Activated CD8-positive, alpha-beta T cell treated with anti-CD3 and anti-CD28 coated beads, Interleukin-2, amount 10 ng/mL, durations not matched to agents 7 days and 5 days (primary cell): ENCODE measurements at regions of chr2 and their contacts with region 1.

Region 1: GRCh38 chr2:162333968-162334367 is 10.0 kb upstream of the GCA start:
- DNase-seq: peak; percentile 41
- ATAC-seq: peak; percentile 63
- H3K4me3 Mint-ChIP-seq: no peak overlapping the region
- H3K27ac Mint-ChIP-seq: no peak overlapping the region
- H3K4me1 Mint-ChIP-seq: peaks cover 1% of the 10 kb centered on the region
- H3K27me3 Mint-ChIP-seq: no peaks in the 10 kb centered on the region

Region 2: DNA sequence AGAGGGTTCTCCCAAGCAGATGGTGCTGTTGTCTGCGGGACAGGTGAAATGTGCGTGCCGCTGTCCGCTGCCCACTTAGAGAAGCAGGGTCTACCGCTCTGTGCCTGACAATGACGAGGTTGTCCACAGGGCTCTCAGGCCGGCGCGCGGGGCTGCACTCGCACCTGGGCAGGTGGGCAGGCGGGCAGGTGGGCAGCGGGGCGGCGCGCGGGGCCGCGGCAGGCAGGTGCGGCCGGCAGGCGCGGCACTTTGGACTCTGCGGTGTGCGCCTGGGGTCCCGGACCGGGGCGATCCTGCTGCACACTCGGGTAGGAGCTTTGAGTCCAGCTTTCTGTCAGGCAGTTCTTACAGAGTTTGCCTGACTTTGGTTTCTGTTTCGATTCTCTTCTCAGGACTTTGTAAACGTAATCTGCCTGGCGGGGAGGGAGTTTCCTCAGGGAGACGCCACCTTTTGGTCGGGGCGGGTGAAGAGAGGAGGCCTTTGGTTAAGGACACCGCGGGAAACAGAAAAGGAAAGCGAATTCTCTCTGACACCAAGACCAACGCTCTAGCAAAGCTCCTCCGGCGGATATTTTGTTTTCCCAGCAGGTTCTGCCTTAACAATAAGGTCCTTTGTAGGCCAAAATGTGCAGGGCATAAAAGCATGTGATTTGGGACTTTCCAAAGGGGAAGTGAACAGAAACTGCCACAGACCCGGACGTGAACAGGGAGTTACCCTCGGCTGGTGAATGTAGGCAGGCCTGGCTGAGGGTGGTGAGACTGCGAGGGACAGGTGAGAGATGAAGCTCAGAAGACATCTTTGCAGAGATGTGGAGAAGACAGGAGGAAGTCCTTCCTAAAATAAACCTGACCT is 15.4 kb before region 1 on chr2 and contains the start of gene IFIH1:
- CTCF ChIA-PET with region 1: interaction called, 28 read pairs
- POLR2A ChIA-PET with region 1: interaction called, 6 read pairs
- DNase-seq: peak; percentile 82
- ATAC-seq: peak; percentile 87
- H3K4me3 Mint-ChIP-seq: peak within 1 kb of the TSS; percentile 95
- H3K27ac Mint-ChIP-seq: peak within 1 kb of the TSS; percentile 99
- H3K4me1 Mint-ChIP-seq: peaks cover 61% of the 10 kb centered on the region
- H3K27me3 Mint-ChIP-seq: no peaks in the 10 kb centered on the region
- total RNA-seq, gene IFIH1: 37.3 to 37.6 TPM

Region 3: GRCh38 chr2:162343824-162344616 is 10.1 kb after region 1 on chr2 and contains the start of gene GCA:
- CTCF ChIA-PET with region 1: interaction called, 17 read pairs
- POLR2A ChIA-PET with region 1: no interaction called
- DNase-seq: peak; percentile 99
- ATAC-seq: peak; percentile 99
- H3K4me3 Mint-ChIP-seq: peak within 1 kb of the TSS; percentile 89
- H3K27ac Mint-ChIP-seq: peak within 1 kb of the TSS; percentile 81
- H3K4me1 Mint-ChIP-seq: peaks cover 16% of the 10 kb centered on the region
- H3K27me3 Mint-ChIP-seq: peaks cover 8% of the 10 kb centered on the region
- total RNA-seq, gene GCA: 13.1 to 13.7 TPM